Activated CD8-positive, alpha-beta memory T cell treated with anti-CD3 and anti-CD28 coated beads, Interleukin-2, amount 10 ng/mL, durations not matched to agents 7 days and 5 days (primary cell): ENCODE measurements at regions of chr1 and their contacts with region 1.

Region 1: DNA sequence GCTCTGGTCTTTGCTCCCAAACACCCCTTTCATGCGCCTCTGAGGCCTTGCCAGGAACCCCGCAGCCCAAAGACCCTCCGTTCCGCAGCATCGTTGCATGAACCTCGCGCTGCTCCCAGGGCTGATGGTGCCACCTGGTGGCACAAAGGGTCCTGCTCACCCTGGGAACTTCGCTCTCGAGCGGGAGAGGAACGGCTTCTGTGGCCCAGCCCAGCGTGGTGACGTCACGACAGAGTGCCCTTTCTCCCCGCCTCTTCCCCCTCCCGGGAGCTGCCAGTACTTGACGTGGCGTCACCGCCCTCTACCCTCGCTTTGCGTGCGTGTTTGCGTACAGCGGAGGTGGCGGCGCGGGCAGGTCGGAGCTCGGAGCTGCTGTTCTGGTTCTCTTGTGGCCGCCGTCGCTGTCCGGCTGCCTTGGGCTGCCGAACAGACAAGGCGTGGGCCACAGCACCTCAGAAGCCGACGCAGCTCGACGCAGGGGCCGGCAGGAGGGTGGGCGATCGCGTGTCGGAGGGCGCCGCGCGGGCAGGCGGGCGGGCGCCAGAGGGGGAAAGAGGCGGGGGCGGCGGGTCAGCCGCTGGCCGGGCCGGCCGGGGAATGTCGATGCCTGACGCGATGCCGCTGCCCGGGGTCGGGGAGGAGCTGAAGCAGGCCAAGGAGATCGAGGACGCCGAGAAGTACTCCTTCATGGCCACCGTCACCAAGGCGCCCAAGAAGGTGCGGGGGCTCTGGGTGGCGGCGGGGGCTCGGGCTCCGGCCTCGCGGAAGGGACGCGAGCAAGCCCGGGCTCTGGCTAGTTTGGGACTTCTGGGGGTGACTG is at the start of gene AHCYL1:
- DNase-seq: peak; percentile 100
- ATAC-seq: peak; percentile 98
- H3K4me3 Mint-ChIP-seq: peak within 1 kb of the TSS; percentile 99
- H3K27ac Mint-ChIP-seq: peak within 1 kb of the TSS; percentile 98
- H3K4me1 Mint-ChIP-seq: peaks cover 43% of the 10 kb centered on the region
- H3K27me3 Mint-ChIP-seq: no peaks in the 10 kb centered on the region
- total RNA-seq, gene AHCYL1: 67.6 to 70.0 TPM

Region 2: DNA sequence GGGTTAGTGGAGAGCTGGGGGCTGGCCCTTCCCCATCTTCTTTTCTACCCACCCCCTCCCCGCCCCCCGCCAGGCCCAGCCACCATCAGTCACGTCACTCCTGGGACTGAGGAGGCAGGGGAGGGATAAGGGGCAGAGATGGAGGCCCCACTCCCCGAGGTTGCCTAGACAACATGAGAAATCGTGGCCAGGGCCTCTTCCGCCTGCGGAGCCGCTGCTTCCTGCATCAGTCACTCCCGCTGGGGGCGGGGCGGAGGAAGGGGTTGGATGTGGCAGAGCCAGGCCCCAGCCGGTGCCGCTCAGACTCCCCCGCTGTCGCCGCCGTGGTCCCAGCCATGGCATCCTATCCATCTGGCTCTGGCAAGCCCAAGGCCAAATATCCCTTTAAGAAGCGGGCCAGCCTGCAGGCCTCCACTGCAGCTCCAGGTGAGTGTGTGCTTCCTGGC is 363.8 kb before region 1 on chr1:
- CTCF ChIA-PET with region 1: interaction called, 11 read pairs
- DNase-seq: peak; percentile 99
- ATAC-seq: peak; percentile 88
- H3K4me3 Mint-ChIP-seq: peak overlapping the region; percentile 99
- H3K27ac Mint-ChIP-seq: peak overlapping the region; percentile 98
- H3K4me1 Mint-ChIP-seq: peaks cover 63% of the 10 kb centered on the region
- H3K27me3 Mint-ChIP-seq: no peaks in the 10 kb centered on the region

Region 3: DNA sequence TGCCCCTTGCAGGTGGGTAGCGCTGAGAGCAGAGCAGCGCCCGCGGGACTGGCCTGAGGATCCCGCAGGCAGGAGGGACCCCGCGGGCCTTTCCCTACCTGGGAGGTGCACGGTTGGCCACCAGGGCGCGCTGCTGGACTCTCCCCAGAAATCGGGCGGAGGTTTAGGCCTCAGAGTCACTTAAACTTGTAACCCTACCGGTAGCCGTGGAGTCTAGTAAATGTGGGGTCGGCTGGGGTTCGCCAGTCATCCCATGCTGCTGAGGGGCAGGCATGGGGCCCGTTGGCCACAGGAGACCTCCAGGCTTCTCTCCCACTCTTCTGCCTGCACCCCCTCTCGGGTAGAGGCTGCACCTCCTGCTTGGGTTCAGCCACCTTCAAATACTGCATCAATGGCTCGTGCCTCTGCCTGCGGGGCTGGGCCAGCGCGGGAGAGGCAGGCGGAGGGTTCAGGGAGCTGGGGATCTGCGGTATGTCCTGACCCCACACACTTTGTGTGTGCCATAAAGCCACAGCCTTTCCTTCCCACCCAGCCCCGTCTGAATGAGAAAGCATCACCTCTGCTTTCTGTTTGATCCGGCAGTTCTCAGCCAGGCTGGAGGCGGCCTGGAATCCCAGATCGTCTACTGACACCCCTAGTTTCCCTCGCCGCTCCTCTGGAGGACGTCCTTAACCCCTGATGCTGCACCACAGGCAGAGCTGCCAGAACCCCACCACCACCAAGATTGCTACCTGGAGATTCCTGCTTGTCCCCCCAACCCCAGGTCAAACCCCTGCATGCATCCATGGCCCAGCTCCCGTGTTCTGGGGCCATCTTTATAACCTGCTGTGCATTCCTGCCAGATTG is 341.1 kb before region 1 on chr1:
- CTCF ChIA-PET with region 1: interaction called, 137 read pairs
- DNase-seq: peak; percentile 93
- ATAC-seq: peak; percentile 97
- H3K4me3 Mint-ChIP-seq: no peak overlapping the region
- H3K27ac Mint-ChIP-seq: no peak overlapping the region
- H3K4me1 Mint-ChIP-seq: peaks cover 11% of the 10 kb centered on the region
- H3K27me3 Mint-ChIP-seq: peaks cover 2% of the 10 kb centered on the region

Region 4: DNA sequence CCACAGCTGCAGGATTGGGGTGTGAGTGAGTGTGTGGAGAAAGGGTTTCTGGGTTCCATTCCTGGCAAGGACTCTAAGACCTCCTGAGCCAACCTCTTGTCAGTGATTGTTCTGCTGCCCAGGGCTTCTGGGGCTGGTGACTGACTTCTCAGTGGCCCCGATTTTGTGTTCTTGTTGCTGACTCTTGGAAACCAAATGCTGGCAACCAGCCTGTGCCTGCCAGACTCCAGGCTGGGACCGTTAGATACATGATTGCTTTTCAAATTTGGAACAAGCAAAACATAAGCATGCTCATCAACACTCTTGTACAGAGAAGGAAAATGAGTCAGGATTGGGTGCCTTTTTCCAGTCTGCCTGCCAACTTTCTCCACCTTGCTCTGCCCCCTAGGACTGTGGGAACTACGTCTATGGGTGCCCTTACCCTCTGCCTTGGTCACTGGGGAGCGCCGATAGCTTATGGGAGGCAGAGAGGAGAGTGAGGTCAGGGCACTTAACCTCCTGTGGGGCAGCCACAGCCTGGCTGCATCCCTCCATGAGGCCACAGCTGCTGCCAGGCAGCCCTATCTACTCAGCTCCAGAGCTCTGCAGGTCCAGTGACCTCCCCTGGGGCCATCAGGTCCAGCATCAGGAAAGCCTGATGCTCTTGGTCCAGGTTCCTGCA is 181.6 kb before region 1 on chr1:
- CTCF ChIA-PET with region 1: interaction called, 29 read pairs
- DNase-seq: peak; percentile 41
- ATAC-seq: peak; percentile 5
- H3K4me3 Mint-ChIP-seq: peak overlapping the region; percentile 75
- H3K27ac Mint-ChIP-seq: peak overlapping the region; percentile 99
- H3K4me1 Mint-ChIP-seq: peaks cover 91% of the 10 kb centered on the region
- H3K27me3 Mint-ChIP-seq: no peaks in the 10 kb centered on the region

Region 5: GRCh38 chr1:109917768-109918606 is 66.7 kb before region 1 on chr1:
- CTCF ChIA-PET with region 1: interaction called, 22 read pairs
- DNase-seq: no peak
- ATAC-seq: no peak
- H3K4me3 Mint-ChIP-seq: no peak overlapping the region
- H3K27ac Mint-ChIP-seq: peak overlapping the region; percentile 21
- H3K4me1 Mint-ChIP-seq: peaks cover 64% of the 10 kb centered on the region
- H3K27me3 Mint-ChIP-seq: no peaks in the 10 kb centered on the region

Region 6: GRCh38 chr1:110005971-110006370 is 21.3 kb after region 1 on chr1:
- CTCF ChIA-PET with region 1: interaction called, 43 read pairs
- DNase-seq: no peak
- ATAC-seq: no peak
- H3K4me3 Mint-ChIP-seq: no peak overlapping the region
- H3K27ac Mint-ChIP-seq: no peak overlapping the region
- H3K4me1 Mint-ChIP-seq: peaks cover 21% of the 10 kb centered on the region
- H3K27me3 Mint-ChIP-seq: no peaks in the 10 kb centered on the region

Region 7: DNA sequence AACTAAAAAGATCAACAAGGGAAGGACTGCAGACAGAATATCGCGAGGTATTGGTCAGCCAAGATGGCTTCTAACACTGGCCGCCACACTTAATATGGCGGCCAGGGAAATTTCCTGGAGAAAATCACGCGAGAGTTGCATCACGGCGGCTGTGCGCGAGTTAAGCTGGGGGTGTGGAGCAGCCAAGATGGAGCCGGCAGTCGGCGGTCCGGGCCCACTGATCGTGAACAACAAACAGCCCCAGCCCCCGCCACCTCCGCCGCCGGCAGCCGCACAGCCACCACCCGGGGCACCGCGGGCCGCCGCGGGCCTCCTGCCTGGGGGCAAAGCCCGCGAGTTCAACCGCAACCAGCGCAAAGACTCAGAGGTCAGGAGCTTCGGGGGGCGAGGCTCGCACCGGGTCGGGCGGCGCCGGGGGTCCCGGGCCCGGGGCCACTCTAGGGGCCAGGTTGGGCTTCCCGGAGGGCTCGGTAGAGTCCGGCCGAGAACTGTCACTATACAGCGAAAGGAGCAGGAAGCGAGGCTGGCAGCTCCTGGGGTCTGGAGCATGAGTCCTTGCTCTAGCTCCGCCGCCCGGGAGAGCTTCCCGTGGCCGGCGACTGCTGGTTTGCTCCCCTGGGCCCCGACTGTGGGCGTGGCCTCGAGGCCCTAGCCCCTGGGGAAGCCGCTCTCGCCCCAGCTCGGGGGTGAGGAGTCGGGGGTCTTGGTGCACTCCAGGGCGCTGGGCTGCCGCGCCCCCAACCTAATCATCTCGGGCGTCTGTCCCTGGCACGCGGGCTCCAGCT is 50.0 kb after region 1 on chr1 and contains the start of gene STRIP1:
- CTCF ChIA-PET with region 1: interaction called, 46 read pairs
- DNase-seq: peak; percentile 96
- ATAC-seq: peak; percentile 88
- H3K4me3 Mint-ChIP-seq: peak within 1 kb of the TSS; percentile 79
- H3K27ac Mint-ChIP-seq: peak within 1 kb of the TSS; percentile 95
- H3K4me1 Mint-ChIP-seq: peaks cover 54% of the 10 kb centered on the region
- H3K27me3 Mint-ChIP-seq: no peaks in the 10 kb centered on the region
- total RNA-seq, gene STRIP1: 40.4 to 40.8 TPM

Region 8: DNA sequence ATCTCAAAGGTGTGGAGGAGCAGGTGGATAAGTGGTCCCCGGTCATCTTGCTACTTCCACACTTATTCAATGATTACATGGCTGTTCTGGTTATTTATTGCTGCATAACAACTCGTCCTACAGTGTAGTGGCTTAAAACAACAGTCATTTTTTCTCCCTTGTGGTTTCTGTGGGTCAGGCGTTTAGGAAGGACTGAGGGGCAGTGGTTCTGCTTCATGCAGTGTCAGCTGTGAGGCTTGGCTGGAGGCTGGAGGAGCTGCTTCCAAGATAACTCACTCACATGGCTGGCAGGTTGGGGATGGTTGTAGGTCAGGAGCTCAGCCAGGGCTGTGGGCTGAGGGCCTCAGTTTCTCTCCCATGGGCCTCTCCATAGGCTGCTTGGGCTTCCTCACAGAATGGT is 159.7 kb after region 1 on chr1:
- CTCF ChIA-PET with region 1: no interaction called
- DNase-seq: no peak
- ATAC-seq: no peak
- H3K4me3 Mint-ChIP-seq: no peak overlapping the region
- H3K27ac Mint-ChIP-seq: no peak overlapping the region
- H3K4me1 Mint-ChIP-seq: peaks cover 4% of the 10 kb centered on the region
- H3K27me3 Mint-ChIP-seq: peaks cover 20% of the 10 kb centered on the region